Right lobe of liver (tissue), 6 donors: ENCODE measurements at regions of chr7 and their contacts with region 1.

Region 1: DNA sequence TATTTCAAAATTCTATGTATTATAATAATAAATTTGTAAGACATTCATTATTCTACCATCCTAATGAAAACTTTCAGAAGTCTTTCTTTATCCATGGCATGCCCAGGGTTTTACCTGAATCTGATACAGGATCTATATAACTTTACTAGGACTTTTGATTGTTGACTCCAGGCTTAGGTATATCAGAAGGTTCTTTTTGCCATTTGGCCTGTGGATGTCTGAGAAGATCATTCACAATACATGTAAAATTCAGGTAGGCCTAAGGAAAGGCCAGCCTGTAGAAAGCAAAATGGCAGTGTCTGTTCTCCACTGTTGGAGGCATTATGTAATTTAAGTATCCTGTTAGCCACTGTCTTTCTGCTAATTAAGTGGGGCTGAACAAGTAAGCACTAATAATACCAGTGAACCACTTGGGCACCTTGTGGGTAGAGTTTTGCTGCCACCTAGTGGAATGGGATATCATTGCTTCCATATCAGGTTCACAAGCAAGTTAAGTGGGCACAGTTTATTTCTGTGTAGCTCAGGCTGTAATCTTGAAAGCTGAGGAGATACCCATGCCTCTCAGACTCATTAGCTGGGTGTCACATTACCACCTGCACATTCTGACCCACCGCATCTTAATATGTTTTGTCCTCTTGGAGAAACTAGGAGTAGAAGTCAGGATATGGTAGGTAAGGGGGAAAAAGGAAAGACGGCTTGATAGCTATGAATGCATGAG is 105.5 kb downstream of the SEPTIN7 start:
- DNase-seq: peak in 1 of 3 donors; percentile 61
- ATAC-seq: peak; percentile 94 to 99 (median 96)
- H3K4me3 ChIP-seq: no peak overlapping the region
- H3K27ac ChIP-seq: no peak overlapping the region
- H3K4me1 ChIP-seq: no peaks in the 10 kb centered on the region
- H3K27me3 ChIP-seq: no peaks in the 10 kb centered on the region
- CTCF ChIP-seq: peak; percentile 90 to 97 (median 92)
- POLR2A ChIP-seq: no peak

Region 2: GRCh38 chr7:35707422-35707821 is 198.9 kb before region 1 on chr7:
- intact Hi-C with region 1: loop called (anchors 5 to 10 kb)
- DNase-seq: no peak
- ATAC-seq: no peak
- H3K4me3 ChIP-seq: no peak overlapping the region
- H3K27ac ChIP-seq: no peak overlapping the region
- H3K4me1 ChIP-seq: no peaks in the 10 kb centered on the region
- H3K27me3 ChIP-seq: no peaks in the 10 kb centered on the region
- CTCF ChIP-seq: no peak
- POLR2A ChIP-seq: no peak

Region 3: DNA sequence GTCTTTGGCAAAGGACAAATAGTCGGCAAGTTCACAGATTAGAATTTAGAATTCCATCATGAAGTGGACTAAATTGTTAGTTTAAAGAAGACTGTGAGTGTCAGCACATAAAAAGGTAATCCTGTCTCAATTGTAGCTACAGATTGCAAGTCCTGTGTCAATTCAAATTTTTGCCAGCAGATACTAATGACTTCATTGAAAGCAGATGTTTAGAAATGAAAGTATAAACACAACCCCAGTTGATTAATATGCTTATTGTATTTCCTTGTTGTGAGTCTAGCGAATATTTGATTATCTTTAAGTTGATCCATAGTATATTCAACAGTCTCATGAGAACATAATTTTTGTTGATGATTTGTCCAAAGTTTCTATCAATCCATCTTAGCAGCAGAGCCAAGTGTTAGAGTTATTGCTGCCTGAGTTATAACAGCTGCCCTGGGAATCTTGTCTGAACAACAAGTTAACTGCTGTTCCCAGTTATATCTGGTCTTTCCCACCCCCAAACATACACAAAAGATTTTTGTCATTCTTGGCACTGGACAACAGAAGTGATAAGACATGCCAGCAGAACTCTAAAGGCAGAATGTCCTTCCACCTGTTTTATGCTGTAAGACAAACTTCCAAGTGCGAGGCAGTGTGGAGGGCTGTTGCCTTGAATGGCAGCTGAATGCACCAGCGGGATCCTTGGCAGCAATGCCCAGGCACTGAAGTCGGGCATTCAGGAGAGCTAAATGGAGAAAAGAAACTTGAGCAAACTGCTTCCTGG is 190.1 kb before region 1 on chr7:
- intact Hi-C with region 1: loop called in 1 of 2 experiments (anchors 10 kb)
- DNase-seq: no peak
- ATAC-seq: peak in 1 of 4 donors; percentile 13
- H3K4me3 ChIP-seq: no peak overlapping the region
- H3K27ac ChIP-seq: no peak overlapping the region
- H3K4me1 ChIP-seq: no peaks in the 10 kb centered on the region
- H3K27me3 ChIP-seq: no peaks in the 10 kb centered on the region
- CTCF ChIP-seq: no peak
- POLR2A ChIP-seq: no peak

Region 4: DNA sequence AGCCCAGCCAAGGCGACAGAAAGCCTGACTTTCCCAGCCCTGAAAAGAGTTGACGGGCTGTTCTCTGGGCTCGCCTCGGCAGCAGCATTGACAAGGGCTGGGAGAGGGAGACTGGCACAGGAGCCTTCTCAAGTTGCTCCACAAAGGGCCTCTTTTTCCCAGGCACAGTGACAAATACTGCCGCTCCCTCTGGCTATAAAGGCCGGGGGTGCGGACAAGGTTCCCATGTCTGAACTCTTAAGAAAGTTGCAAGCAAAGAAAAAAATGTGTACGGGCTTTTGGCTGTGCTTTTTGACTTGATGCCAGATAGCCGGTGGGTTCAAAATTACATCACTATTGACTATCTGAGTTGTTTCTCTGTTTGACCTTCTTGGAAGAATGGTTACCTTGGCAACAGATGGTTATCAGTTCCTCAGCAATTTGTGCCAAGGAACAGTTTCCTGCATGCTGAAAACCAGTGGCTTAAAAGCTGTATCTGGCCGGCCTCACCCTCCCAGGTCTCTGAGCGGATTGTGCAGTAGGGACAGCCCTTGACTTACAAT is 130.8 kb after region 1 on chr7:
- intact Hi-C with region 1: no loop called
- DNase-seq: no peak
- ATAC-seq: peak; percentile 66 to 87 (median 80)
- H3K4me3 ChIP-seq: no peak overlapping the region
- H3K27ac ChIP-seq: peak overlapping the region in 1 of 3 donors; percentile 47
- H3K4me1 ChIP-seq: peaks cover 0 to 16% (median 0%) of the 10 kb centered on the region in 4 donors
- H3K27me3 ChIP-seq: no peaks in the 10 kb centered on the region
- CTCF ChIP-seq: no peak
- POLR2A ChIP-seq: no peak